ENCODE measurements at regions of chr3 and their contacts with region 1.

Region 1: DNA sequence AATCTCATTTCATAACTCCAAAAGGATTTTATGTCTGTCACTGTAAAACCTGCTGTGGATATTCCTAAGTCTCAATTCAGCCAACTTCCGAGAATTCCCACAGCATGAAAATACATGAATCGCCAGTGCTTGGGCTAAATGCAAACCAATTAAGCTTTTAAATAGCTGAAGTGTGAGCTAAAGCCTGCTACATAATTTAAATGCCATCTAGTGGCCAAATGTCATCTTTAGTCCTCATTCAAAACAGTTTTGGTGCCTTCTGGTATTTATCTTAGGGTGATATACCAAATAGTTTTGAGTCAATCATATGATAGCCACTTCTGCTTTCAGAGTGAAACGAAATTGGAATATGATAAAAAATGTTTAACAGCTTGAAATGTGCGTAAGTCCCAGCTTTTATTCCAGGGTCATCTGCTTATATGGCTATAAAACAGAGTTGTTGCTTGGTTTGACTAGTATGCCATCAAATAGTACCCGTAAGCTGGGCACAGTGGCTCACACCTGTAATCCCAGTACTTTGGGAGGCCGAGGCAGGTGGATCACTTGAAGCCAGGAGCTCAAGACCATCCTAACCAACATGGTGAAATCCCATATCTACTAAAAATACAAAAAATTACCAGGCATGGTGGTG is 41.8 kb upstream of the CCNL1 start:
- DNase-seq: no peak
- ATAC-seq: peak in 7 of 8 donors; percentile 38 to 75 (median 59)
- H3K4me3 ChIP-seq: no peak overlapping the region
- H3K27ac ChIP-seq: no peak overlapping the region
- H3K4me1 ChIP-seq: peaks cover 0 to 20% (median 8%) of the 10 kb centered on the region in 9 donors
- H3K27me3 ChIP-seq: no peaks in the 10 kb centered on the region
- CTCF ChIP-seq: peak; percentile 28 to 71 (median 59)

Region 2: DNA sequence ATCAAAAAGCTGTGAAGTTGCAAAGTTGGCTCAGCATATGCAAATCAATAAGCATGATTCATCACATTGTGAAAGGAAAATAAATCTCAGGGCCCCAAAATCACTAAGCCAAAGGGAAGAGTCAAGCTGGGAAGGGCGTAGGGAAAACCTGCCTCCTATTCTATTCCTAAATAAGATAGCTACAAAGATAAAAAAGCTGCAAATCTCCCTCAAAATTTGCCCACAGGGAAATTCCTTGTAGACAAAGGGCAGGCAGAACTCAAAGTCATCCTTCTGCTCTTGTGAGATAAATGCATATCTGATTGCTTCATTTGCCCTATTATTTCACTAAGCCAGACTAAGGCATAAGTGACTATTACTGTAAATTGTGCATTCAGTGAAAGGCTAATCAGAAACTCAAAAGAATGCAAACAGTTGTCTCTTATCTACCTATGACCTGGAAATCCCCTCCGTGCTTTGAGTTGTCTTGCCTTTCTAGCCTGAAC is 11.3 kb before region 1 on chr3:
- intact Hi-C with region 1: no loop called
- DNase-seq: no peak
- ATAC-seq: no peak
- H3K4me3 ChIP-seq: no peak overlapping the region
- H3K27ac ChIP-seq: no peak overlapping the region
- H3K4me1 ChIP-seq: no peaks in the 10 kb centered on the region
- H3K27me3 ChIP-seq: no peaks in the 10 kb centered on the region
- CTCF ChIP-seq: no peak

Region 3: DNA sequence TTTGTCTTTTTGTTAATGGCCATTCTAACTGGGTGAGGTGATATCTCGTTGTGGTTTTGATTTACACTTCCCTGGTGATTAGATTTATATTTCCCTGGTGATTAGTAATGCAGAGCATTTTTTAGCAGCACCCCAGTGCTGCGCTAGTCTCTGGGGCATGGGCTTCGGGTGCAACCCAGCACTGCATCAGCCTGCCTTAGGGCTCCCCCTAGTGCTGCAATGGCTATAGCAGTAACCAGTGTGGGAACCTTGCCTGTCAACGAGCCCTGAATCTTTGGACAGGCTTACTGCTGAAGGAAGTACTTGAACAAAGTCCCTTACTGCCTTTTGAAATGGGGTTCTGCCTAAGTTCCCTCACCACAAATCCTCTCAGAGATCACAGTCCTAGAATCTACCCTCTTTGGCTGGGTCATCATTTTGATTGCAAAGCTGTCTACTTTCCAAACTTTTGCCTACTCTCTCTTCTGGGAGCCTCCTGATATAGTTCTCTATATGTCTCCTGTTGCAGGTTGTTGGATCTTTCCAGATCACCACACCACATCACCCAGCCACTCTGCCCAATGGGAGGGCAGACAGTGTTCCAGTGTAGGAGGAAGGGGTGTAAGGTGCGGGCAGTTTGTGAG is 37.4 kb after region 1 on chr3:
- intact Hi-C with region 1: loop called in 1 of 10 experiments (anchors 1 kb)
- DNase-seq: peak; percentile 38 to 58
- ATAC-seq: peak; percentile 67 to 95 (median 89)
- H3K4me3 ChIP-seq: no peak overlapping the region
- H3K27ac ChIP-seq: no peak overlapping the region
- H3K4me1 ChIP-seq: peaks cover 0 to 9% (median 0%) of the 10 kb centered on the region in 9 donors
- H3K27me3 ChIP-seq: no peaks in the 10 kb centered on the region
- CTCF ChIP-seq: peak; percentile 36 to 89 (median 70)

Region 4: GRCh38 chr3:157369727-157370421 is 168.1 kb after region 1 on chr3:
- intact Hi-C with region 1: loop called in 1 of 10 experiments (anchors 10 kb)
- DNase-seq: no peak
- ATAC-seq: peak in 5 of 8 donors; percentile 20 to 85 (median 52)
- H3K4me3 ChIP-seq: no peak overlapping the region
- H3K27ac ChIP-seq: no peak overlapping the region
- H3K4me1 ChIP-seq: peaks cover 0 to 13% (median 6%) of the 10 kb centered on the region in 9 donors
- H3K27me3 ChIP-seq: no peaks in the 10 kb centered on the region
- CTCF ChIP-seq: no peak

Region 5: GRCh38 chr3:157493627-157494550 is 292.1 kb after region 1 on chr3:
- intact Hi-C with region 1: loop called (anchors 1 to 5 kb)
- DNase-seq: no peak
- ATAC-seq: peak in 1 of 8 donors; percentile 55
- H3K4me3 ChIP-seq: no peak overlapping the region
- H3K27ac ChIP-seq: no peak overlapping the region
- H3K4me1 ChIP-seq: peaks cover 0 to under 1% (median 0%) of the 10 kb centered on the region in 9 donors
- H3K27me3 ChIP-seq: peaks cover 0 to 17% (median 4%) of the 10 kb centered on the region in 7 donors
- CTCF ChIP-seq: peak; percentile 20 to 77 (median 64)

Region 6: DNA sequence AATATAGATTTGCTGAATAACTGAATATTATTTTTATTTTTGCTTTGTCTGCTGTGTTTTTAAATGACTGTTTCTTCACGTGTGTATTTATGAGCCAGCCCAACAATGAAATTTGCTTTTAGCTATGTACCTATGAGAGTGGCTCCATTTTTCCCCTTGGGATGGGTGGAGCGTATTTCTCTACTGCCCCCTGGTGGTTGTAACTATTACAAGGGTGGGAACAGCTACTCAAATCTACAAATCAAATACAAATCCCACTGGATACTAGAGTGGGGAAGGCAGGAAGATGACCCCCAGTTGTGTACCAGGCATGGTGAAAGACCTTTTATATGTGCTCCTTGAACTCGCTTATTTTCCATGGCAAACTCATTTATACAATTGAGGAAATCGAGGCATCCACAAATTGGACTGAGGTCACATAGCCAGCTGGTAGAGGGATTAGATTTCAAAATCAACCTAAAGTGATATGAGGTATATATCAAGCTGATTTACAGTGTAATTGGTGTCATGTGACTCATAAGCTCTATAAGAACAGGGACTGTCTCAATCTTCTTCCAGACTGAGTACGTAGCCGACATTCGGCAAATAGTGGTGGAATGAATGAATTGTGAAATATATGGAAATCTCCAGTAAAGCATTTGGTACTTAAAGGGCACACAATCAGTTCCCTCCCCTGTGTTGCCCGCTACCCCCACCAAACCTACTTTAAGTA is 371.0 kb after region 1 on chr3:
- intact Hi-C with region 1: loop called in 1 of 10 experiments (anchors 5 kb)
- DNase-seq: peak in 1 of 2 donors; percentile 17
- ATAC-seq: peak in 2 of 8 donors; percentile 33 to 39
- H3K4me3 ChIP-seq: no peak overlapping the region
- H3K27ac ChIP-seq: no peak overlapping the region
- H3K4me1 ChIP-seq: no peaks in the 10 kb centered on the region
- H3K27me3 ChIP-seq: no peaks in the 10 kb centered on the region
- CTCF ChIP-seq: peak; percentile 35 to 80 (median 66)